ENCODE measurements at regions of chr3 and their contacts with region 1.

Region 1: GRCh38 chr3:177554895-177555759 is 357.8 kb upstream of the TBL1XR1 start:
- DNase-seq: peak in 2 of 5 donors; percentile 44 to 49
- ATAC-seq: peak in 2 of 4 donors; percentile 75 to 80
- H3K4me3 ChIP-seq: no peak overlapping the region
- H3K27ac ChIP-seq: peak overlapping the region in 2 of 12 donors; percentile 11 to 30
- H3K4me1 ChIP-seq: peaks cover 0 to 28% (median 2%) of the 10 kb centered on the region in 12 donors
- H3K27me3 ChIP-seq: no peaks in the 10 kb centered on the region
- CTCF ChIP-seq: no peak
- POLR2A ChIP-seq: no peak

Region 2: GRCh38 chr3:177589911-177590381 is 34.8 kb after region 1 on chr3:
- intact Hi-C with region 1: loop called in 1 of 10 experiments (anchors 5 kb)
- DNase-seq: no peak
- ATAC-seq: peak; percentile 44 to 84 (median 66)
- H3K4me3 ChIP-seq: no peak overlapping the region
- H3K27ac ChIP-seq: peak overlapping the region in 4 of 12 donors; percentile 16 to 30 (median 18)
- H3K4me1 ChIP-seq: peaks cover 0 to 49% (median 2%) of the 10 kb centered on the region in 12 donors
- H3K27me3 ChIP-seq: no peaks in the 10 kb centered on the region
- CTCF ChIP-seq: no peak
- POLR2A ChIP-seq: no peak